ENCODE measurements at regions of chr7 and their contacts with region 1.

Region 1: GRCh38 chr7:131235489-131236317 is 92.0 kb upstream of the MKLN1 start:
- DNase-seq: peak; percentile 95 to 99
- ATAC-seq: peak; percentile 96 to 98
- H3K4me3 ChIP-seq: peak overlapping the region; percentile 27
- H3K27ac ChIP-seq: peak overlapping the region; percentile 91 to 96
- H3K4me1 ChIP-seq: peaks cover 69% of the 10 kb centered on the region
- CTCF ChIP-seq: no peak
- EP300 ChIP-seq: peak in 1 of 2 experiments; percentile 60; a peak in 1 of 5 replicates
- POLR2A ChIP-seq: no peak
- RAD21 ChIP-seq: peak; percentile 24 to 42

Region 2: GRCh38 chr7:130982160-130982638 is 253.5 kb before region 1 on chr7:
- CTCF ChIA-PET with region 1: no interaction called
- POLR2A ChIA-PET with region 1: no interaction called
- DNase-seq: peak; percentile 43 to 63
- ATAC-seq: peak; percentile 83 to 85
- H3K4me3 ChIP-seq: no peak overlapping the region
- H3K27ac ChIP-seq: peak overlapping the region in 1 of 2 experiments; percentile 45; a peak in 4 of 6 replicates
- H3K4me1 ChIP-seq: peaks cover 41% of the 10 kb centered on the region
- CTCF ChIP-seq: peak; percentile 77
- EP300 ChIP-seq: no peak
- POLR2A ChIP-seq: no peak
- RAD21 ChIP-seq: peak; percentile 63 to 76

Region 3: GRCh38 chr7:131027287-131027773 is 208.4 kb before region 1 on chr7:
- CTCF ChIA-PET with region 1: no interaction called
- POLR2A ChIA-PET with region 1: no interaction called
- DNase-seq: no peak
- ATAC-seq: peak; percentile 60 to 62
- H3K4me3 ChIP-seq: no peak overlapping the region
- H3K27ac ChIP-seq: no peak overlapping the region
- H3K4me1 ChIP-seq: peaks cover 49% of the 10 kb centered on the region
- CTCF ChIP-seq: no peak
- EP300 ChIP-seq: no peak
- POLR2A ChIP-seq: no peak
- RAD21 ChIP-seq: no peak

Region 4: DNA sequence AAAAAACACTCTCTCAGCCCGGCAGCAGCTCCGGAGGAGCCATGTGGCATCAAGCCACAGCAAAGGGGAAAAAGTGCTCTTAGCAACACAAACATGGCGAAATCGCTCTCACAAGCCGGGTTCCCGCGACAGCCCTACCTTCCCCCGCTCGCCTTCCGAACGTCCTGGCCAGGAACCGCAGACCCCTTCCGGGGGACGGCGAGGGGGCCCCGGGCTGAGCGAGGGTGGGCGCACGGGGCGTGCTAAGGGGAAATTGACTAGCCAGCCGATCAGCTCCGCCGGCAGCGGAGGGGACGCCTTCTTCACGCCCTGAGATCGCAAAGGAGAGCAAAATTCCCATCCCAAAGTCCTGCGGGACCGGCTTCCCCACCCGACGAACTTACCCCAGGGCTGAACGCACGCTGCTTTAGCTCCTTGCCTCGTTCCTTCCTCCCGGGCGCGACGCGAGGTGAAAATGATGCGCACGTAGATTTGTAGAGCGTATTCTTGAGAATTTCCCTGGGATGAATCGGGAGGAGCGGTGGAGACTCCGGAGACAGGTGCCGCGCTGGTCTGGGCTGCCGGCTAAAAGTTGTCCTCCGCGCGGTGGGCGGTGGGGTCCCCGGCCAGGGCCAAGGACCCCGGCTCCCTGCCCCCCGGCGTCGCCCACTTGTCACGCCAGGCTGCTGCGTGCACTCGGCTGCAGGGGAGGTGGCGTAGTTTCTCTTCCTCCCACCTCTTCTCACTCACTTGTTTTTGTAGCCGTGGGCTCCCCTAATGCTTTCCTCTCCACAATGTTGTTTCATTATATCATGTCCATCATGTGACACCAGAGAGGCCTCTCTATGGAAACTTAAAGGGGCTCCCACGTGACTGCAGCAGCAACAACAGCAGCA is 128.1 kb before region 1 on chr7:
- CTCF ChIA-PET with region 1: no interaction called
- POLR2A ChIA-PET with region 1: interaction called, 19 read pairs
- DNase-seq: peak; percentile 80 to 88
- ATAC-seq: peak; percentile 38 to 53; a peak in 5 of 6 replicates
- H3K4me3 ChIP-seq: peak overlapping the region; percentile 78
- H3K27ac ChIP-seq: peak overlapping the region; percentile 98 to 99
- H3K4me1 ChIP-seq: peaks cover 36% of the 10 kb centered on the region
- CTCF ChIP-seq: no peak
- EP300 ChIP-seq: no peak
- POLR2A ChIP-seq: no peak
- RAD21 ChIP-seq: peak in 1 of 2 experiments; percentile 20; a peak in 2 of 5 replicates

Region 5: GRCh38 chr7:131219312-131220041 is 16.2 kb before region 1 on chr7:
- CTCF ChIA-PET with region 1: no interaction called
- POLR2A ChIA-PET with region 1: no interaction called
- DNase-seq: no peak
- ATAC-seq: no peak
- H3K4me3 ChIP-seq: no peak overlapping the region
- H3K27ac ChIP-seq: peak overlapping the region; percentile 19 to 39; a peak in 3 of 6 replicates
- H3K4me1 ChIP-seq: peaks cover 17% of the 10 kb centered on the region
- CTCF ChIP-seq: no peak
- EP300 ChIP-seq: no peak
- POLR2A ChIP-seq: no peak
- RAD21 ChIP-seq: no peak

Region 6: DNA sequence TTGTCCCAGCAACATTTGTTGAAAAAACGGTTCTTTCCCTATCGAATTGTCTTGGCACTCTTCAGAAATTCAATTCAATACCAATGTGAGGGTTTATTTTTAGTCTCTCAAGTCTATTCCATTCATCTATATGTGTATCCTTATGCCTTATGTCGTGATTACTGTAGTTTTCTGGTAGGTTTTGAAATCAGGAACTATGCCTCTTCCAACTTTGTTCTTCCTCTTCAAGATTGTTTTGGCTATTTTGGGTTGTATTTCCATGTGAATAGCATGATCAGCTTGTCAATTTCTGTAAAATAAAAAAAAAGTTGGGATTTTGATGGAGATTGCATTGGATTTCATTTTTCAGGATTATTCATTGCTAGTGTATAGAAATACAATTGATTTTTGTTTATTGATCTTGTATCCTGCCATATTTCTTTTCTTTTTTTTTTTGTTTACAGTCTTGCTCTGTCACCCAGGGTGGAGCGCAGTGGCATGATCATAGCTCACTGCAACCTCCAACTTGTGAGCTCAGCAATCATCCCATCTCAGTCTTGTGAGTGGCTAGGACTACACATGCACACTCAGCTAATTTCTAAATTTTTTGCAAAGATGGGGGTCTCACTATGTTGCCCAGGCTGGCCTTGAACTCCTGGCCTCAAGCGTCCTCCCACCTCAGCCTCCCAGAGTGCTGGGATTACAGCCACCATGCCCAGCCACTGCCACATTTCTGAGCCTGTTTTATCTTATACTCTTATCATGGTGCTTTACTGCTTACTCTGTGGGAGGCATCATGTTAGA is 45.8 kb after region 1 on chr7:
- CTCF ChIA-PET with region 1: interaction called, 3 read pairs
- POLR2A ChIA-PET with region 1: interaction called, 10 read pairs
- DNase-seq: no peak
- ATAC-seq: no peak
- H3K4me3 ChIP-seq: no peak overlapping the region
- H3K27ac ChIP-seq: no peak overlapping the region
- H3K4me1 ChIP-seq: no peaks in the 10 kb centered on the region; the same call in 2 of the 3 replicates
- CTCF ChIP-seq: no peak
- EP300 ChIP-seq: no peak
- POLR2A ChIP-seq: no peak
- RAD21 ChIP-seq: no peak

Region 7: GRCh38 chr7:131327626-131328376 is 92.1 kb after region 1 on chr7 and contains the start of gene MKLN1:
- CTCF ChIA-PET with region 1: no interaction called
- POLR2A ChIA-PET with region 1: interaction called, 16 read pairs
- DNase-seq: peak; percentile 83 to 91
- ATAC-seq: peak; percentile 93 to 95
- H3K4me3 ChIP-seq: peak within 1 kb of the TSS; percentile 91
- H3K27ac ChIP-seq: peak within 1 kb of the TSS; percentile 98
- H3K4me1 ChIP-seq: peaks cover 62% of the 10 kb centered on the region
- CTCF ChIP-seq: no peak
- EP300 ChIP-seq: no peak
- POLR2A ChIP-seq: peak; percentile 89
- RAD21 ChIP-seq: peak; percentile 1 to 22; a peak in 1 of 5 replicates
- polyA plus RNA-seq, gene MKLN1: 84.5 and 109 TPM in 2 replicates

Region 8: GRCh38 chr7:131355921-131356777 is 120.4 kb after region 1 on chr7:
- CTCF ChIA-PET with region 1: no interaction called
- POLR2A ChIA-PET with region 1: no interaction called
- DNase-seq: peak in 1 of 2 experiments; percentile 42
- ATAC-seq: peak; percentile 56 to 65; a peak in 3 of 6 replicates
- H3K4me3 ChIP-seq: no peak overlapping the region
- H3K27ac ChIP-seq: peak overlapping the region; percentile 23 to 49; a peak in 3 of 6 replicates
- H3K4me1 ChIP-seq: peaks cover 64% of the 10 kb centered on the region
- CTCF ChIP-seq: no peak
- EP300 ChIP-seq: no peak
- POLR2A ChIP-seq: no peak
- RAD21 ChIP-seq: no peak